Aorta (tissue), 5 donors: ENCODE measurements at regions of chr15 and their contacts with region 1.

Region 1: DNA sequence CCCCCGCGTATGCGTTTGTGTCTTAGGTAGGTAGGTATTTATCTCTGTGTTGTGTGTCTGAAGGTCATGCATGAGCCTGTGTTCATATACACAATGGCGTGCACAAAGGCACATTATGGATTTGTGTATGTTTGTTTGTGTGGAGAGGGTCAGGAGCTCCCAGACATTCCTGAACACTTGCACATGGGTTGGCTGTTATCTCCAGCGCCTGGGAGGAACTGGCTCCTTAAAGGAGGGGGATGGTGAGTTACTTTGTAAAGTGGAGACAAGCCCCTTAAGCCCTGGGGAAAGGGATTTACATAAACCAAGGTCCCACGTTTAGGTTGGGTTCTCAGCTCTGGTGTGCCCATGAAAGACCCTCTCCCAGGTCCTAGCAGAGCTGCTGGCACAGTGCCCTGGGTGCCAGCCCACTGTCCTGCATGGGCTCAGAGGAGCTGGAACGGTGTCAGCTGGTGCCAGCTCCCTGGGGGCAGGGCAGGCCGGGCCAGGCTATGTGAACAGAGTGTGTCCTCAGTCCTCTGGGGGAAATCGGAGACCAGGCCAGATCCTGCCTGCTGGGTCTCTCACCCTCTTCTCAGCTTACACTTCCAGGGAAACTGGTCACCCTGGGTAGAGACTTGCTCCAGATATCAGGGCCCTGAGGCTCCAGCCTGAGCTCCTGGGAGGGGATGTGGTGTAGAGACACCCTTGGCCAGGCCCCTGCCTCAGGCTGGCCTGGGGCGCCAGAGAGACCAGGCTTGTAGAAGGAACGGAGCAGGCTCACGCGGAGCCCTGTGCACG is 25.1 kb downstream of the SNX33 start:
- DNase-seq: peak in 1 of 2 donors; percentile 86
- ATAC-seq: peak; percentile 52
- H3K4me3 ChIP-seq: no peak overlapping the region
- H3K27ac ChIP-seq: peak overlapping the region; percentile 71 to 96
- H3K4me1 ChIP-seq: peaks cover 0 to under 1% of the 10 kb centered on the region in 2 donors
- H3K27me3 ChIP-seq: no peaks in the 10 kb centered on the region

Region 2: GRCh38 chr15:75178171-75179075 is 494.4 kb before region 1 on chr15:
- intact Hi-C with region 1: no loop called
- DNase-seq: peak in 1 of 2 donors; percentile 84
- ATAC-seq: peak; percentile 48
- H3K4me3 ChIP-seq: peak overlapping the region in 1 of 2 donors; percentile 23
- H3K27ac ChIP-seq: peak overlapping the region in 1 of 2 donors; percentile 43
- H3K4me1 ChIP-seq: peaks cover 0 to 2% of the 10 kb centered on the region in 2 donors
- H3K27me3 ChIP-seq: no peaks in the 10 kb centered on the region

Region 3: DNA sequence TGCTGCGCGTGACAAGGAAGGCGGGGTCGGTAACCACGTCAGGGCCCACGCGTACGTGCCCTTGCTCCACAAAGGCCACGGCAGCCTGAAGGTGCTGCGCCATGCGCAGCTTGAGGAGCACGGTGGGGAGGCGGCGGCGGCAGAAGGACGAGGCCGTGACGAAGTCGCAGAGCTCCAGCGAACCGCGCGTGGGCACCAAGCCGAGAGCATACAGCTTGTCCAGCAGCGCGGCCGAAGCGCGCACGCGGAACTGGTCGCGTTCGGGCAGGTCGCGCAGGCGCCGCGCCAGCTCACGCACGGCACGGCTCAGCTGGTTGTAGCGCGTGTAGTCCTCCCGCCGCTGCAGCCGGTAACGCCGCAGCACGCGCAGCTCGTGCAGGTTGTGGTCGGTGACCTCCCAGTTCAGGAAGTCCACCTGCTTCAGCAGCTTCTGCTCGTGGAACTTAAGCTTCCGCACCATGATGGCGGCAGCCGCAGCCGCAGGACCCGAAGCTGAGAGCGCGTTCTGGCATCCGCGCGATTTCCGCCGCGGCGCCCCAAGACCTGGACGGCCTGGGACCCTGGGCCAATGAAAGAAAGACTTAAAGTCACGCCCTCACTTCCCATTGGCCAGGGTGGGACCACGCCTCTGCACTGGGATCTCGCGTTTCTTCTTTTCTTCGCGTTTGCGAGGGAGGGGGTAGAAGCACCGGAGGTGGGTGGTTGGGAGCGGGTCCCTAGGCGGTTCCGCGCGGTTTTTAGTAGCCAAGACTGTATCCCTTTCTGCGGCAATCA is 32.9 kb before region 1 on chr15 and contains the start of gene IMP3:
- intact Hi-C with region 1: loop called in 1 of 2 experiments (anchors 5 kb)
- DNase-seq: peak; percentile 97
- ATAC-seq: peak; percentile 97
- H3K4me3 ChIP-seq: peak within 1 kb of the TSS; percentile 43 to 46
- H3K27ac ChIP-seq: peak within 1 kb of the TSS; percentile 45 to 76
- H3K4me1 ChIP-seq: peaks cover 0 to 13% of the 10 kb centered on the region in 2 donors
- H3K27me3 ChIP-seq: no peaks in the 10 kb centered on the region
- total RNA-seq, gene IMP3: 35.2 to 46.1 TPM

Region 4: DNA sequence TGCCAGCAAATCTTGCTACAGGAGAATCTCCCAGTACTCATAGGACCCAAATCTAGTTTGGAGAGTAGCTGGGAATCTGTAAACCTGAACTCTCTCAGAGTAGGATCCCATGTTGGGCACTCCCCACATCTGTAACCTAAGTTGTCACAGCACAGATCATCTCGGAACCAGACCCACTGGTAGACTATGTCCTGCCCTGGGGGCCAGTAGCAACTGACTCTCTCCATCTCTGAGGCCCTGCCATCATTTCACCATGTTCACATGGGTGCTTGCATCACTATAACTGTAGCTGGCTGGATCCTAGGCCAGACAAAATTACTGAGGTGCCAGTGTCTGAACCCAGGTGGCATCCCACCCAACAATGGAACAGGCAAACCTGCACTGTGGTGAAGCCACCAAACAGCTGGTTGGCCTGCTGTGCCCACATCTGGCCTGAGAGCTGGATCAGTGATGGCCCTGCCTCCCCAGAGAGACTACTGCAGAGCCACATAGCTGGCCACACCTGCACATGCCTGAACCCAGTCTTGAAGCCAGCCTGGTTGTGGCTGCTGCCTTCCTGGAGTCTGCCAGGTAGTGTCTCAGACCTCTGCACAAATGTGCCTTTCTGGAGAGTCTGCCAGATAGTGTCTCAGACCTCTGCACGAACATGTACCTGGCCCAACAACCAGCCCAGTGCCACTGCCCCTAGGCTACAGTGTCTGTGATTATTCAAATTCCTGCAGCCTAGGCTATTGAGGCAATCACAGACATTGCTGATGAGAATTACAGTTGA is 745.7 kb after region 1 on chr15:
- intact Hi-C with region 1: no loop called
- DNase-seq: no peak
- ATAC-seq: no peak
- H3K4me3 ChIP-seq: no peak overlapping the region
- H3K27ac ChIP-seq: no peak overlapping the region
- H3K4me1 ChIP-seq: no peaks in the 10 kb centered on the region
- H3K27me3 ChIP-seq: no peaks in the 10 kb centered on the region